ENCODE measurements at regions of chr9 and their contacts with region 1.

Region 1: GRCh38 chr9:34072868-34073590 is 24.3 kb upstream of the UBAP2 start:
- DNase-seq: peak in 1 of 2 experiments; percentile 49
- H3K4me3 ChIP-seq: no peak overlapping the region
- H3K27ac ChIP-seq: peak overlapping the region; percentile 49
- H3K4me1 ChIP-seq: peaks cover 0 to 11% (median 5%) of the 10 kb centered on the region in 4 experiments; a peak in 5 of 7 replicates
- H3K27me3 ChIP-seq: no peaks in the 10 kb centered on the region
- CTCF ChIP-seq: no peak
- EP300 ChIP-seq: no peak
- POLR2A ChIP-seq: no peak
- RAD21 ChIP-seq: no peak

Region 2: GRCh38 chr9:33858346-33858885 is 214.6 kb before region 1 on chr9:
- CTCF ChIA-PET with region 1: no interaction called
- POLR2A ChIA-PET with region 1: no interaction called
- DNase-seq: peak in 1 of 2 experiments; percentile 28
- H3K4me3 ChIP-seq: no peak overlapping the region
- H3K27ac ChIP-seq: no peak overlapping the region
- H3K4me1 ChIP-seq: no peaks in the 10 kb centered on the region
- H3K27me3 ChIP-seq: no peaks in the 10 kb centered on the region
- CTCF ChIP-seq: no peak
- EP300 ChIP-seq: no peak
- POLR2A ChIP-seq: no peak
- RAD21 ChIP-seq: no peak

Region 3: GRCh38 chr9:33924978-33925797 is 147.8 kb before region 1 on chr9:
- CTCF ChIA-PET with region 1: interaction called, 26 read pairs
- POLR2A ChIA-PET with region 1: interaction called, 3 read pairs
- DNase-seq: peak; percentile 29 to 73
- H3K4me3 ChIP-seq: no peak overlapping the region
- H3K27ac ChIP-seq: peak overlapping the region; percentile 38; the same call in 1 of the 2 replicates
- H3K4me1 ChIP-seq: peaks cover 0 to 2% (median 0%) of the 10 kb centered on the region in 4 experiments; a peak in 2 of 7 replicates
- H3K27me3 ChIP-seq: no peaks in the 10 kb centered on the region
- CTCF ChIP-seq: peak; percentile 68 to 79 (median 78)
- EP300 ChIP-seq: no peak
- POLR2A ChIP-seq: no peak
- RAD21 ChIP-seq: peak; percentile 54 to 70

Region 4: GRCh38 chr9:34025062-34025461 is 48.0 kb before region 1 on chr9:
- CTCF ChIA-PET with region 1: interaction called, 12 read pairs
- POLR2A ChIA-PET with region 1: interaction called, 3 read pairs
- DNase-seq: no peak
- H3K4me3 ChIP-seq: no peak overlapping the region
- H3K27ac ChIP-seq: no peak overlapping the region
- H3K4me1 ChIP-seq: no peaks in the 10 kb centered on the region
- H3K27me3 ChIP-seq: no peaks in the 10 kb centered on the region
- CTCF ChIP-seq: no peak
- EP300 ChIP-seq: no peak
- POLR2A ChIP-seq: no peak
- RAD21 ChIP-seq: no peak

Region 5: DNA sequence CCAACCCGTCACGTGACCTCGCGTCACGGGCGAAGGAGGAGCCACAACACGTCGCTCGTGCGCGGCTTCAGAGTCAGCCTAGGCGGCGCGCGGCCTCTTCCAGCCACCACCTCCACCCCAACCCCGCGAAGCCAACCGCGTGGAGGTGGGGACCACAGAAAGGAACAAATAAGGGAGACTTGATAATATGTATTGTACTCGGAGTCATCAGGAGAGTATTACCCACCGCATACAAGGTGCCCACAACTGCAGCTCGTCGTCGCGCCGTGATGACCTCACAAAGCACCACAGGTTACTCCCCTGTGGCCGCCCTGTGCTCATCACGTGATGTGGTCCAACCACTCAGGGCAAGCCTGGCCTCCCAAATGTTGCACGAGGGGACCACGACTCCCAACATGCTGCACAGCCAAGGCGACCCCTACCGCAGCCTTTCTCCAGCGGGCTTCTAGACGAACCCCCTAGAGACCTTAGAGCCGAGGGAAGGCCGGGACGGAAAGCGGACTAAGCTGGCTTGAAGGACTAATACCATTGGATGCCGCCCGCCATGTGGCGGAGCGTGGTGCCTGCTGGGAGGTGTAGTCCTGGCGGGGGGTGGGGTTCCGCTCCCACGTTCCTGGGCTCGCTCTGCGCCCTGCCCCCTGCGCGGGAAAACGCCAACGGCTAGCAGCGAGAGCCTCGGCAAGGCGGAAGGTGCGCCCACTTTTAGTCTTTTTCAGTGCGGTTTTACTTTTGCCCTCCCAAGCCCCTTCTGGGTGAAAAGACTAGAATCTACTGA is 23.9 kb before region 1 on chr9:
- CTCF ChIA-PET with region 1: interaction called, 9 read pairs
- POLR2A ChIA-PET with region 1: interaction called, 27 read pairs
- DNase-seq: peak; percentile 88 to 98
- H3K4me3 ChIP-seq: peak overlapping the region; percentile 75 to 97 (median 91)
- H3K27ac ChIP-seq: peak overlapping the region; percentile 100
- H3K4me1 ChIP-seq: peaks cover 0 to 15% (median 6%) of the 10 kb centered on the region in 4 experiments; a peak in 4 of 7 replicates
- H3K27me3 ChIP-seq: no peaks in the 10 kb centered on the region
- CTCF ChIP-seq: no peak
- EP300 ChIP-seq: 0 out of 3 replicates have a peak, but pooled peaks of 1 of the 2 experiments have one; percentile 16
- POLR2A ChIP-seq: peak; percentile 93 to 98
- RAD21 ChIP-seq: peak in 1 of 2 experiments; percentile 0; a peak in 1 of 4 replicates

Region 6: DNA sequence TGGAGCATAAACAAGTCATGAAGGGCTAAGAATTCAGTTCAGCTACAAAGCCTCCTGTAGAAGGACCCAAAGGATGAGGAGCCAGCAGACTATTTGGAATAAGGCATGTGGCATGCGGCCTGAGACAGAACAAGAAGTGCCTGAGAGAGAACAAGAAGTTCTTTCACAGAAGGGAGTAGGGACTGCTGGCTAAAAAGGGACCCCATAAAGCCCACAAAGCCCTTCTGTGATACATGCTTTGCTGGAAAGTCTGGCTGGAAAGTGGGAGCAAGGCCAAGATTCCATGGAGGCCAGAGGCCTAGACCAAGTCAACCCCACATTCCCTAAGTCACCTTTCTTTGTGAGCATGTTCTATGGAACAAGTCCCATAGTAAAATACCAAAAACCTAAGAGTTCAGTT is 11.5 kb after region 1 on chr9:
- CTCF ChIA-PET with region 1: interaction called, 11 read pairs
- POLR2A ChIA-PET with region 1: interaction called, 7 read pairs
- DNase-seq: no peak
- H3K4me3 ChIP-seq: no peak overlapping the region
- H3K27ac ChIP-seq: no peak overlapping the region
- H3K4me1 ChIP-seq: no peaks in the 10 kb centered on the region
- H3K27me3 ChIP-seq: no peaks in the 10 kb centered on the region
- CTCF ChIP-seq: no peak
- EP300 ChIP-seq: no peak
- POLR2A ChIP-seq: no peak
- RAD21 ChIP-seq: no peak

Region 7: GRCh38 chr9:34246453-34246852 is 173.4 kb after region 1 on chr9:
- CTCF ChIA-PET with region 1: no interaction called
- POLR2A ChIA-PET with region 1: no interaction called
- DNase-seq: no peak
- H3K4me3 ChIP-seq: no peak overlapping the region
- H3K27ac ChIP-seq: no peak overlapping the region
- H3K4me1 ChIP-seq: no peaks in the 10 kb centered on the region
- H3K27me3 ChIP-seq: no peaks in the 10 kb centered on the region
- CTCF ChIP-seq: no peak
- EP300 ChIP-seq: no peak
- POLR2A ChIP-seq: no peak
- RAD21 ChIP-seq: no peak